ENCODE measurements at regions of chr1 and their contacts with region 1.

Region 1: GRCh38 chr1:109397538-109398342 is at the start of gene SORT1:
- DNase-seq: no peak
- H3K4me3 ChIP-seq: peak within 1 kb of the TSS; percentile 63
- CTCF ChIP-seq: no peak

Region 2: DNA sequence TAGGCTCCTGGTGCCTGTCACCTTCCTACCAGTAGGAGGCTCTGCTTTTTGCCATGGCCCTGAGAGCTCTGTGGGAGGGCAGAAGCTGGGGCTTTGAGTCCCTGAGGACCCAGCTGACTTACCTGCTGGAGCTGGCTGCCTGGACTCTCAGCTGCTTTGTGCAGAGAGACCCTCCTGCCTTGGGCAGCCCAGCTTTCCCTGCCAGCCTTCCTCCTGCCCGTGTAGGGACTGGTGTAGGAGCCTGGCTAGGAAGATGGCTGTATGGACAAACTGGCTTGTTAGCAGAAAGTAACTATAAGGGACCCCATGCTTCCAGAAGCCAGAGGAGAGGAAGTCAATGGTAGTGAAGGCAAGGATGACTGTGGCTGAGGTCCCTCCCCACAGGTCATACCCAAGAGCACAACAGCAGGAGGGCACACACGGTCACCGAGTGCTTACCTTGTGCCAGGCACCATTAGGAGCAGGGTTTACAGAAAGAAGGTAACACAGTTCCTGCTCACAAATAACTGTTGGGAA is 158.1 kb before region 1 on chr1:
- CTCF ChIA-PET with region 1: interaction called, 48 read pairs
- POLR2A ChIA-PET with region 1: no interaction called
- DNase-seq: no peak
- H3K4me3 ChIP-seq: no peak overlapping the region
- CTCF ChIP-seq: peak; percentile 62

Region 3: DNA sequence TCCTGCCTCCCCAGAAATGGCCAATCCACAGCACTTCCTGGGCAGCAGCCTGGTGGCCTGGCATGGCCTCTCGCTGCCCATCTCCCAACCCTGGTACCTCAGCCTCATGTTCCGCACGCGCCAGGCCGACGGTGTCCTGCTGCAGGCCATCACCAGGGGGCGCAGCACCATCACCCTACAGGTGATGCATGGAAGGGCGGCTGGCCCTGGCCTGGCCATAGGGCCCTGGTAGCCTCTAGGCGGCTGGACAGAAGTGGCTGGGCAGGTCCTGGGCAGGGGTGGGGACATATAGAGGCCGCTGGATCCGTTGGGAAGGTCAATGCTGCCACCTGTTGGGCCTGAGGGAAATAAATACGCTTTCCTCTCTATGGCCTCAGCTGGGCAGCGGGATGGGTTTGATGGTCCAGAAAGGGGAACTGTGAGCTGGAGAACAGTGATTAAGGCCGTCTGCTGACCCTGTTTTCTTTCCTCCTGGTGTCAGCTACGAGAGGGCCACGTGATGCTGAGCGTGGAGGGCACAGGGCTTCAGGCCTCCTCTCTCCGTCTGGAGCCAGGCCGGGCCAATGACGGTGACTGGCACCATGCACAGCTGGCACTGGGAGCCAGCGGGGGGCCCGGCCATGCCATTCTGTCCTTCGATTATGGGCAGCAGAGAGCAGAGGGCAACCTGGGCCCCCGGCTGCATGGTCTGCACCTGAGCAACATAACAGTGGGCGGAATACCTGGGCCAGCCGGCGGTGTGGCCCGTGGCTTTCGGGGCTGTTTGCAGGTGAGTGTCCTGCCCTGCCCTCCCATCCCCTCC is 133.9 kb before region 1 on chr1:
- CTCF ChIA-PET with region 1: interaction called, 206 read pairs
- POLR2A ChIA-PET with region 1: interaction called, 3 read pairs
- DNase-seq: no peak
- H3K4me3 ChIP-seq: no peak overlapping the region
- CTCF ChIP-seq: peak; percentile 98

Region 4: GRCh38 chr1:109282952-109283747 is 114.6 kb before region 1 on chr1 and contains the start of gene PSRC1:
- CTCF ChIA-PET with region 1: interaction called, 340 read pairs
- POLR2A ChIA-PET with region 1: interaction called, 6 read pairs
- DNase-seq: peak; percentile 74
- H3K4me3 ChIP-seq: peak within 1 kb of the TSS; percentile 97
- CTCF ChIP-seq: peak; percentile 89

Region 5: GRCh38 chr1:109379422-109379821 is 18.3 kb before region 1 on chr1:
- CTCF ChIA-PET with region 1: interaction called, 31 read pairs
- POLR2A ChIA-PET with region 1: no interaction called
- DNase-seq: no peak
- H3K4me3 ChIP-seq: no peak overlapping the region
- CTCF ChIP-seq: no peak

Region 6: GRCh38 chr1:109426278-109427170 is 28.8 kb after region 1 on chr1 and contains the start of gene PSMA5:
- CTCF ChIA-PET with region 1: interaction called, 11 read pairs
- POLR2A ChIA-PET with region 1: no interaction called
- DNase-seq: peak; percentile 97
- H3K4me3 ChIP-seq: peak within 1 kb of the TSS; percentile 92
- CTCF ChIP-seq: no peak